ENCODE measurements at regions of chr9 and their contacts with region 1.

Region 1: DNA sequence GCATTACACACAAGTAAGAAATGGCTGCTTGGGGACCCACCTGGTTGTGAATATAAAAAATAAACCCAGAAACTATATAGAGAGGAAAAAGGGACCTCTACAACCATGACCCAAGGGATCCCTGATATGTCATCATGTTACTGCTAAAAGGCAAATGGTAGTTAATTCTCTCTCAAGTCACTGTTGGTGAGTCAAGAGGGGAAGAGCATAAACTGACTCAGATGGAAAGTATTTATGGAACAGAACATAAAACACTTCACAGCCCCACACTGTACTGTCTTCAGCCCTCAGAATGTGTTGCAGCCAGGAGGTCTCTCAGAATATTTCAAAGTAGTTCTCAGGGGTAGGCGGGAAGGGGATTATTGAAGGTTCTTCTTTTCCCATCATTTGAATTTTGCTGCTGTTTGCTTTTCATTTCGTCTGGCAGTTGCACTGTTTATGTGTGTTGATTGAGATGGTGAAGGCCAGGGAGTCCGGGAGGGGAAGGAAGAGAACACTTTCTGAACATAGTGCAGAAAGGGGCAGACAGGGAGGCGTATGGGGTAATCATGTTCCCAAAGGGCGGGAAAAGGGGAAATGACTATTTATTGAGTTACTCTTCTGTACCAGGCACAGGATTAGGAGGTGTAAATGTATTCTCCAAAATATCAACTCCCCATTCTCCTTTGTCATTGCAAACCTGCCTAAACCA is 85.5 kb downstream of the TEK start:
- DNase-seq: no peak
- ATAC-seq: no peak
- H3K4me3 ChIP-seq: no peak overlapping the region
- H3K4me3 Mint-ChIP-seq: no peak overlapping the region
- H3K27ac ChIP-seq: no peak overlapping the region
- H3K27ac Mint-ChIP-seq: no peak overlapping the region
- H3K4me1 ChIP-seq: no peaks in the 10 kb centered on the region
- H3K4me1 Mint-ChIP-seq: no peaks in the 10 kb centered on the region
- H3K27me3 ChIP-seq: no peaks in the 10 kb centered on the region
- H3K27me3 Mint-ChIP-seq: peaks cover 0 to 10% (median 0%) of the 10 kb centered on the region in 5 donors

Region 2: DNA sequence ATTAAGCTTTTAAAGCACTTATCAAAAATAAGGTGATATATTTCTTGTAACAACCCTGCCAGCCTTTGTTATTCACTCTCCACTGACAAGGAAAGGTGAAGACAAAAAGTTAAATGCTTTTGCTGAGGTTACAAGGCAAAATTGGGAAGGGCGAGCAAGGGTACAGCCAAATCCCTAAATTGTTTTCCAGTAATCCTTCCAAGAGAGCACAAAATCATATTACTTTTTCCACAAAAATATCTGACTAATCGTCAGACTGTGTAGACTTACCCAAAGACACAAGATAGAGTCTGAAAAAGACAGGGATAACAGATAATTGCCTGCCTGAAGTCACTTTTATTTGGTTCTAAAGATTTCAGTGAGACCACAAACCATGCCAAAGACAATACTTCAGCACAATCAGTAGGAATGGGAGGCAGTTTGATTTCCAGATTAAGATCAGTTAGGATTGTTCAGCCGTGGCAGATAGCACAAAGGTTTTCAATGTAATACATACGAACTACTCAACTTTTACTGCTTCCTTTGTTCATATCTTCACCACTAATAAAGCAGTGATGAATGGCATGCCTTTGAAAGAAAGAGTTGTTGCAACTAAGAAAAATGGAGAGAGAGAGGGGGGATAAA is 1132.5 kb before region 1 on chr9:
- CTCF ChIA-PET with region 1: no interaction called
- POLR2A ChIA-PET with region 1: no interaction called
- intact Hi-C with region 1: loop called in 1 of 2 experiments (anchors 10 kb)
- DNase-seq: no peak
- ATAC-seq: no peak
- H3K4me3 ChIP-seq: no peak overlapping the region
- H3K4me3 Mint-ChIP-seq: no peak overlapping the region
- H3K27ac ChIP-seq: no peak overlapping the region
- H3K27ac Mint-ChIP-seq: no peak overlapping the region
- H3K4me1 ChIP-seq: no peaks in the 10 kb centered on the region
- H3K4me1 Mint-ChIP-seq: no peaks in the 10 kb centered on the region
- H3K27me3 ChIP-seq: no peaks in the 10 kb centered on the region
- H3K27me3 Mint-ChIP-seq: no peaks in the 10 kb centered on the region

Region 3: DNA sequence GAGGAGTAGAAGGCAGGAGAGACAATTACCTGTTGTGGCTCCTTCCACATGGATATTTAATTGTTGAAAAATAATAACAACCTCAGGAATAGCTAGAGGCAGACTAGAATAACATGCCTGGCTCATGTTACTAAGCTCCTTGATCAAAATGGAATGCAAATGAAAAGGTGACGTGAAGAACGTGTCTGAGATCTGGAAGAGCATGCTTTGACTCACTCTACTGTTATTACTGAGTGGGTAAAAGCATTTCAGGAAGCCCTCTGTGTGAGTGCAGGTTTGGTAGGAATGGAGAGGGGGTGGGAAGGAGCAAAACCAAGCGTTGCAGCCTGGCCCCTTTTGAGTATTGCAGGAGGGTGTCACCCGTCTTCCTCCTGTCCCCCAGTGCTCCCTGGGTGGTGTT is 17.6 kb after region 1 on chr9:
- CTCF ChIA-PET with region 1: no interaction called
- POLR2A ChIA-PET with region 1: no interaction called
- intact Hi-C with region 1: no loop called
- DNase-seq: no peak
- ATAC-seq: no peak
- H3K4me3 ChIP-seq: no peak overlapping the region
- H3K4me3 Mint-ChIP-seq: no peak overlapping the region
- H3K27ac ChIP-seq: no peak overlapping the region
- H3K27ac Mint-ChIP-seq: no peak overlapping the region
- H3K4me1 ChIP-seq: no peaks in the 10 kb centered on the region
- H3K4me1 Mint-ChIP-seq: no peaks in the 10 kb centered on the region
- H3K27me3 ChIP-seq: no peaks in the 10 kb centered on the region
- H3K27me3 Mint-ChIP-seq: peaks cover 0 to 15% (median 0%) of the 10 kb centered on the region in 5 donors

Region 4: GRCh38 chr9:27303219-27303618 is 108.7 kb after region 1 on chr9:
- CTCF ChIA-PET with region 1: no interaction called
- POLR2A ChIA-PET with region 1: no interaction called
- intact Hi-C with region 1: no loop called
- DNase-seq: no peak
- ATAC-seq: no peak
- H3K4me3 ChIP-seq: no peak overlapping the region
- H3K4me3 Mint-ChIP-seq: no peak overlapping the region
- H3K27ac ChIP-seq: no peak overlapping the region
- H3K27ac Mint-ChIP-seq: no peak overlapping the region
- H3K4me1 ChIP-seq: no peaks in the 10 kb centered on the region
- H3K4me1 Mint-ChIP-seq: peaks cover 0 to 1% (median 0%) of the 10 kb centered on the region in 7 donors
- H3K27me3 ChIP-seq: no peaks in the 10 kb centered on the region
- H3K27me3 Mint-ChIP-seq: peaks cover 0 to 11% (median 8%) of the 10 kb centered on the region in 5 donors

Region 5: DNA sequence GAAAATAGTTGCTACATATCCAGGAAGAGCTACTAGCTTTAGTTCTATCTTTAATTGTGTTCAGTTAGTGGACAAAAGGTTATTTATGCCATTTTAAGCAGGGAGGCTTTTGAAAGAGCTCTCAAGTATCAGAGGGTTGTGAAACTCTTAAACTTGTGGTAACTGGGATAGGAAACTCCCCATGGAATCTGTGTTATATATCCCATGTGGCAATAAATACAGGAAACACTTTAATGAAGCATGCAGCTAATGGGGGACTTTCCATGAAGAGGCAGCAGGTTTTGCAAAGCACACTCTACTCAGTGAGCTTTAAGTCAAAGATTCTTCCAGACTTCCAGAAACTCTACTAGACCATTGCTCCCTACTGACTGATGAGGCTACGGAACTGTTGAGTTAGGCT is 1183.7 kb after region 1 on chr9:
- CTCF ChIA-PET with region 1: no interaction called
- POLR2A ChIA-PET with region 1: no interaction called
- intact Hi-C with region 1: no loop called
- DNase-seq: no peak
- ATAC-seq: no peak
- H3K4me3 ChIP-seq: no peak overlapping the region
- H3K4me3 Mint-ChIP-seq: no peak overlapping the region
- H3K27ac ChIP-seq: no peak overlapping the region
- H3K27ac Mint-ChIP-seq: no peak overlapping the region
- H3K4me1 ChIP-seq: no peaks in the 10 kb centered on the region
- H3K4me1 Mint-ChIP-seq: no peaks in the 10 kb centered on the region
- H3K27me3 ChIP-seq: no peaks in the 10 kb centered on the region
- H3K27me3 Mint-ChIP-seq: no peaks in the 10 kb centered on the region

Measured in naive thymus-derived CD4-positive, alpha-beta T cell (primary cell).